RWPE1 (cell line): ENCODE measurements at regions of chr1 and their contacts with region 1.

Region 1: GRCh38 chr1:18666438-18666861 is 35.8 kb downstream of the PAX7 start:
- DNase-seq: peak; percentile 17
- H3K27ac ChIP-seq: peak overlapping the region; percentile 98
- CTCF ChIP-seq: no peak

Region 2: GRCh38 chr1:18681423-18681835 is 15.0 kb after region 1 on chr1:
- CTCF ChIA-PET with region 1: interaction called, 12 read pairs
- POLR2A ChIA-PET with region 1: no interaction called
- DNase-seq: peak; percentile 74
- H3K27ac ChIP-seq: no peak overlapping the region
- CTCF ChIP-seq: peak; percentile 73